Endothelial cell of umbilical vein (primary cell): ENCODE measurements at regions of chr20 and their contacts with region 1.

Region 1: DNA sequence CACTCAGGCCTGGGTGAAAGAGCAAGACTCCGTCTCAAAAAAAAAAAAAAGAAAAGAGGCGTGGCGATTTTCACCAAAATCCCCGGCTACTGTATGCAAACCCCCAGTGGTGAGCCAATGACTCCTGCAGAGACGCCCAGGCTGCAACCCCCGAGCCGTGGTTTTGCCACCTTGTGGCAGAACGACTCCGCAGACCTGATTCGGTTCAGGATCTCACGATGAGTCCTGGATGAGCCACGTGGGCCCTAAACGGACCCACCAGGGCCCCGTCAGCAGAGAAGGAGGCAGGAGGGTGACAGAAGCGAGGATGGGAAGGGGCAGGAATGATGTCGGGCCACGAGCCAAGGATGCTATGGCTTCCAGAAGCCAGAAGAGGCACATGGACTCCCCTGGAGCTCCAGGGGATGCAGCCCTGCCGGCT is 42.5 kb downstream of the SLC2A4RG start:
- DNase-seq: no peak
- H3K4me3 ChIP-seq: no peak overlapping the region
- H3K27ac ChIP-seq: no peak overlapping the region
- H3K4me1 ChIP-seq: no peaks in the 10 kb centered on the region
- H3K27me3 ChIP-seq: no peaks in the 10 kb centered on the region
- CTCF ChIP-seq: no peak
- POLR2A ChIP-seq: no peak

Region 2: GRCh38 chr20:63739130-63740069 is 42.7 kb before region 1 on chr20 and contains the start of gene SLC2A4RG:
- CTCF ChIA-PET with region 1: interaction called, 10 read pairs
- POLR2A ChIA-PET with region 1: no interaction called
- dilution Hi-C with region 1: no loop called
- intact Hi-C with region 1: no loop called
- DNase-seq: peak; percentile 40
- H3K4me3 ChIP-seq: peak within 1 kb of the TSS; percentile 41 to 72 (median 52)
- H3K27ac ChIP-seq: no peak within 1 kb of the TSS
- H3K4me1 ChIP-seq: peaks cover 9% of the 10 kb centered on the region
- H3K27me3 ChIP-seq: no peaks in the 10 kb centered on the region
- CTCF ChIP-seq: no peak
- POLR2A ChIP-seq: no peak
- total RNA-seq, gene SLC2A4RG: 69.3 and 69.4 TPM in 2 replicates

Region 3: DNA sequence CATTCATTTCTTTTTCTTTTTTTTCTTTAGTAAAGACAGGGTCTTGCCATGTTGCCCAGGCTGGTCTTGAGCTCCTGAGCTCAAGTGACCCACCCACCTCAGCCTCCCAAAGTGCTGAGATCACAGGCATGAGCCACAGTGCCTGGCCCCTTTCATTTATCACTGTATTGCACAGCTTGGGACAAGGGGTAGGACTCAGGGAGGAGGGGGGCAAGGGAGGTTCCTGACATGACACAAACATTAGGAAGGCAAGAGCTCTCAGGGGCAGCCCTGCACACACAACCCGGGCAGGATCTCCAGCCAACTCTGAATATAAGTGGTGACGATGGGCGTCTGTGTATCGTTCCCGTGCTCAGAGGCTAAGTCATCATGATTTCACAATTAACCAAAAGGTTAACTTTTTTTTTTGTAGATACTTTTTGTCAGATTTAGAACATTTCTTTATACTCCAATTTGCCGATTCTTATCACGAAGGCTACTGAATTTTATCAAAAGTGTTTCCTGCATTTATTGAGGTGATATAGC is 22.6 kb before region 1 on chr20:
- CTCF ChIA-PET with region 1: interaction called, 10 read pairs
- POLR2A ChIA-PET with region 1: no interaction called
- dilution Hi-C with region 1: no loop called
- intact Hi-C with region 1: no loop called
- DNase-seq: no peak
- H3K4me3 ChIP-seq: no peak overlapping the region
- H3K27ac ChIP-seq: no peak overlapping the region
- H3K4me1 ChIP-seq: no peaks in the 10 kb centered on the region
- H3K27me3 ChIP-seq: no peaks in the 10 kb centered on the region
- CTCF ChIP-seq: no peak
- POLR2A ChIP-seq: no peak

Region 4: DNA sequence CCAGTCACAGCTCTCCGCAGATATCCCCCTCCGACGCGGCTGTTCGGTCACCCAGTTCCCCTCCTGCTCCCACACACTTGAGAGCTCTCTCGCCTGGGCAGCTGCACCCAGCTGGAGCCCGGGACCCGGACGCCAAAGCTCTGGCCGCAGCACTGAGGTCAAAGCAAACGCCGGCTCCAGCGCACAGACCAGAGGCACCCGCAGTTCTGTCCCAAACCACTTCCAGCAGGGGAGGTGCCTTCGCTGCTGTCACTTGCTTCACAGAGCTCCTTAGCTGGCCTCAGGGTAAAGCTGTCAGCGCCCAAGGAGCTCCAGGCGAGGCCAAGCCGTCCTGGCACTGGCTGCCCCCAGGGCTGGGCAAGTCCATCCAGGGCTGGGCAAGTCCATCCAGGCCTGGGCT is 14.6 kb before region 1 on chr20:
- CTCF ChIA-PET with region 1: interaction called, 12 read pairs
- POLR2A ChIA-PET with region 1: no interaction called
- dilution Hi-C with region 1: no loop called
- intact Hi-C with region 1: no loop called
- DNase-seq: no peak
- H3K4me3 ChIP-seq: no peak overlapping the region
- H3K27ac ChIP-seq: no peak overlapping the region
- H3K4me1 ChIP-seq: no peaks in the 10 kb centered on the region
- H3K27me3 ChIP-seq: no peaks in the 10 kb centered on the region
- CTCF ChIP-seq: no peak
- POLR2A ChIP-seq: no peak

Region 5: DNA sequence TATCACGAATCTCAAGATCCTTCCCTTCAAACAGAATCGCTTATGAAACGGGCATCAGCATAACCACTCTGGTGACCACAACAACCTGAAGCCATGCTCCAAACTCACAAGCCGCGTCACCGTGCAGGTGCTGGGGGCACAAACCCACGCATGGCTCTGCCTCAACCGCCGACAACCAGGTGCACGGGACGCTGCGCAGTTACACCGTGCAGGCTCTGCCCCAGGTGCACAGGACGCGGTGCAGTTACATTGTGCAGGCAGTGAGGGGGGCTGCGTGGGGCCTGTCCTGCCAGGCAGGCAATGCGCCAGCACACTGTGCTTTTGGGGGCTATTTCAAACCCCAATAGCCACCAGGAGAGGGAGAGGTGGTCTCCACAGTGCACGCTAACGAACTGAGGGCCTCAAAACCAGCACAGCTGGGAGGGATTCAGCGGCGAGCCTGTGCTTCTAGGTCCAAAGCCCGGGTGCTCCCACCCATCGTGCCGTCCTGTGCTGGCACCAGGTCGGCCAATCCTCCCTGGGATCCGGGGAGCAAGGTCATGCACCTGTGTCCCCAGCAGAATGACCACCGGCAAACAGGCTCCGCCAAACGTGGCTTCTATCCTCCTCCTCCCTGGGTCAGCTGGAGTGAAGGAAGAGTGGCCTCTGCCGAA is 13.2 kb after region 1 on chr20:
- CTCF ChIA-PET with region 1: interaction called, 15 read pairs
- POLR2A ChIA-PET with region 1: no interaction called
- dilution Hi-C with region 1: no loop called
- intact Hi-C with region 1: no loop called
- DNase-seq: no peak
- H3K4me3 ChIP-seq: no peak overlapping the region
- H3K27ac ChIP-seq: no peak overlapping the region
- H3K4me1 ChIP-seq: no peaks in the 10 kb centered on the region
- H3K27me3 ChIP-seq: no peaks in the 10 kb centered on the region
- CTCF ChIP-seq: no peak
- POLR2A ChIP-seq: no peak

Region 6: GRCh38 chr20:63858393-63859165 is 76.5 kb after region 1 on chr20:
- CTCF ChIA-PET with region 1: interaction called, 24 read pairs
- POLR2A ChIA-PET with region 1: no interaction called
- dilution Hi-C with region 1: no loop called
- intact Hi-C with region 1: no loop called
- DNase-seq: peak; percentile 72
- H3K4me3 ChIP-seq: no peak overlapping the region
- H3K27ac ChIP-seq: no peak overlapping the region
- H3K4me1 ChIP-seq: peaks cover 25% of the 10 kb centered on the region
- H3K27me3 ChIP-seq: peaks cover 0 to 5% of the 10 kb centered on the region in 2 experiments
- CTCF ChIP-seq: peak; percentile 24 to 62
- POLR2A ChIP-seq: no peak

Region 7: DNA sequence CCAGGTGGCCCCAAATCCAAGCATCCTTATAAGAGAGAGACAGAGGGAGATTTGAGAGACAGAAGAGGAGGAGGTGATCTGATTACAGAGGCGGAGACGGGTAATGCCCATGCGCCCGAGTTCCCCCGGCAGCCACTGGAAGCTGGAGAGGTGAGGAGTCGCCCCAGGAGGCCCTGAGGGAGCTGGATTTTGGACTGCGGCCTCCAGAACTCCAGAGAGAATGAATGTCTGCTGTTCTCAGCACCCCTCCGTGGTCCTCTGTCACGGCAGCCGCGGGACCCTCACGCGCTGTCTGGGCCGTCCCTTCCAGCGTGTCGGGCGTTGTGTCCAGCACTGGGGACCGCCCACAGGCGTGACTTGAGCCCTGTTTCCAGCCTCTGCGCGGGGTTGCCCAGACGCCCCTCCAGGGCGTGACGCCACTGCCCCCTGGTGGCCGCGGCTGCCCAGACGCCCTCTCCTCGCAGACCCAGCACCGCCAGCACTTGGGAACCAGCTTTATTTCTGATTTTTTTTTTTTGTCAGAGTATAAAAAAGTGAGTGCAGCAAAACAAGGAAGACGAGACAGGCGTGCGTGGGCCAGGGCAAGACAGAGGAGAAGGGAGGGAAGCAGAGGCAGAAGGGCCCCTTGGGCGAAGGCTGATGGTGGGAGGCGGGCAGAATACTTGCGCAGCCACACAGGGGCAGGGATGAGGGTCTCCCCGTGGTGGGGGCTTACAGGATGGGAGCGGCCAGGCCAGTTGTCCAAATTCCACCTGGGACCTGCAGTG is 191.8 kb after region 1 on chr20:
- CTCF ChIA-PET with region 1: interaction called, 7 read pairs
- POLR2A ChIA-PET with region 1: no interaction called
- dilution Hi-C with region 1: no loop called
- intact Hi-C with region 1: loop called (anchors 2 kb)
- DNase-seq: peak; percentile 87
- H3K4me3 ChIP-seq: peak overlapping the region in 2 of 3 experiments; percentile 7 to 35
- H3K27ac ChIP-seq: no peak overlapping the region
- H3K4me1 ChIP-seq: peaks cover 23% of the 10 kb centered on the region
- H3K27me3 ChIP-seq: no peaks in the 10 kb centered on the region
- CTCF ChIP-seq: peak; percentile 99
- POLR2A ChIP-seq: peak; percentile 63

Region 8: GRCh38 chr20:64091770-64092169 is 309.7 kb after region 1 on chr20:
- CTCF ChIA-PET with region 1: no interaction called
- POLR2A ChIA-PET with region 1: no interaction called
- dilution Hi-C with region 1: no loop called
- intact Hi-C with region 1: no loop called
- DNase-seq: no peak
- H3K4me3 ChIP-seq: no peak overlapping the region
- H3K27ac ChIP-seq: no peak overlapping the region
- H3K4me1 ChIP-seq: no peaks in the 10 kb centered on the region
- H3K27me3 ChIP-seq: peaks cover 2% of the 10 kb centered on the region in 2 experiments
- CTCF ChIP-seq: no peak
- POLR2A ChIP-seq: no peak